MCF 10A (cell line): ENCODE measurements at regions of chr2 and their contacts with region 1.

Region 1: DNA sequence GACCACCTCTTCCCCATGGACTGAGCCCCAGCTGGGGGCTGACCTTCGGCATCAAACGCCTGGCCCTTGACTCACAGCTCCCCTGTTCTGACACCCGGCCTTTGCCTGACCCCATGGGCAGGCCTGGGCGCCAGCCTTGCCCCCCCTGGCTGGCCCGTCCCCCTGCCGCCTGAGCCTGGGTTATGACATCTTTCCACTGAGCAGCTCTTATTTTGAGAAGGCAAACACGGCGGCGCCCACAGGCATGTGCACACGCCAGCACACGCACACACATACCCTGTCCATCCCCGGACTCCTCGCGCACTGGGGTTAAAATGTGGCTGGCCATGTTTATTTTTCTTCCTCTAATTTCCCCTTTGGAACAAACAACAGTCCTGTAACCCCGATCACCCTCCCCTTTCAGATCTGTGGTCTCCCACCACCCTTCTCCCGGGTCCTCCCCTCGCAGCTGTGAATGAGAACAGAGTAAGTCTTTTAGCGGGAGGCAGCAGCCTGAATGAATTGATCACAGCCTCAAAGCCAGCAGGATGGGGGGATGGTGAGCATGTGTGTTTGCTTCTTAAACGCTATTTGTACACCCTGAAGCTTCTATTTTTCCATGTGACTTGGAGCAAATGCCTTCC is 11.8 kb upstream of the ATOH8 start:
- DNase-seq: peak; percentile 58
- H3K4me3 Mint-ChIP-seq: peak overlapping the region; percentile 11
- H3K27ac Mint-ChIP-seq: peak overlapping the region; percentile 91
- H3K4me1 Mint-ChIP-seq: peaks cover 29% of the 10 kb centered on the region
- H3K27me3 Mint-ChIP-seq: peaks cover 19% of the 10 kb centered on the region
- CTCF ChIP-seq: no peak

Region 2: GRCh38 chr2:85601771-85602475 is 140.0 kb before region 1 on chr2:
- CTCF ChIA-PET with region 1: no interaction called
- POLR2A ChIA-PET with region 1: no interaction called
- intact Hi-C with region 1: no loop called
- DNase-seq: peak; percentile 44
- H3K4me3 Mint-ChIP-seq: peak overlapping the region; percentile 79
- H3K27ac Mint-ChIP-seq: peak overlapping the region; percentile 70
- H3K4me1 Mint-ChIP-seq: peaks cover 15% of the 10 kb centered on the region
- H3K27me3 Mint-ChIP-seq: no peaks in the 10 kb centered on the region
- CTCF ChIP-seq: no peak

Region 3: GRCh38 chr2:85760371-85760770 is 18.4 kb after region 1 on chr2:
- CTCF ChIA-PET with region 1: interaction called, 4 read pairs
- POLR2A ChIA-PET with region 1: interaction called, 10 read pairs
- intact Hi-C with region 1: no loop called
- DNase-seq: no peak
- H3K4me3 Mint-ChIP-seq: no peak overlapping the region
- H3K27ac Mint-ChIP-seq: no peak overlapping the region
- H3K4me1 Mint-ChIP-seq: peaks cover 15% of the 10 kb centered on the region
- H3K27me3 Mint-ChIP-seq: peaks cover 17% of the 10 kb centered on the region
- CTCF ChIP-seq: no peak